ENCODE measurements at regions of chr3 and their contacts with region 1.

Region 1: GRCh38 chr3:56702490-56703315 is 19.6 kb upstream of the TASOR start:
- DNase-seq: peak in 3 of 6 donors; percentile 35 to 61 (median 44)
- ATAC-seq: peak; percentile 66 to 96 (median 92)
- H3K4me3 ChIP-seq: no peak overlapping the region
- H3K27ac ChIP-seq: no peak overlapping the region
- H3K4me1 ChIP-seq: peaks cover 0 to 6% (median 0%) of the 10 kb centered on the region in 3 donors
- H3K27me3 ChIP-seq: no peaks in the 10 kb centered on the region
- CTCF ChIP-seq: peak; percentile 64 to 80 (median 72)

Region 2: GRCh38 chr3:56154297-56154696 is 548.4 kb before region 1 on chr3:
- intact Hi-C with region 1: no loop called
- DNase-seq: no peak
- ATAC-seq: no peak
- H3K4me3 ChIP-seq: no peak overlapping the region
- H3K27ac ChIP-seq: no peak overlapping the region
- H3K4me1 ChIP-seq: no peaks in the 10 kb centered on the region
- H3K27me3 ChIP-seq: no peaks in the 10 kb centered on the region
- CTCF ChIP-seq: no peak

Region 3: DNA sequence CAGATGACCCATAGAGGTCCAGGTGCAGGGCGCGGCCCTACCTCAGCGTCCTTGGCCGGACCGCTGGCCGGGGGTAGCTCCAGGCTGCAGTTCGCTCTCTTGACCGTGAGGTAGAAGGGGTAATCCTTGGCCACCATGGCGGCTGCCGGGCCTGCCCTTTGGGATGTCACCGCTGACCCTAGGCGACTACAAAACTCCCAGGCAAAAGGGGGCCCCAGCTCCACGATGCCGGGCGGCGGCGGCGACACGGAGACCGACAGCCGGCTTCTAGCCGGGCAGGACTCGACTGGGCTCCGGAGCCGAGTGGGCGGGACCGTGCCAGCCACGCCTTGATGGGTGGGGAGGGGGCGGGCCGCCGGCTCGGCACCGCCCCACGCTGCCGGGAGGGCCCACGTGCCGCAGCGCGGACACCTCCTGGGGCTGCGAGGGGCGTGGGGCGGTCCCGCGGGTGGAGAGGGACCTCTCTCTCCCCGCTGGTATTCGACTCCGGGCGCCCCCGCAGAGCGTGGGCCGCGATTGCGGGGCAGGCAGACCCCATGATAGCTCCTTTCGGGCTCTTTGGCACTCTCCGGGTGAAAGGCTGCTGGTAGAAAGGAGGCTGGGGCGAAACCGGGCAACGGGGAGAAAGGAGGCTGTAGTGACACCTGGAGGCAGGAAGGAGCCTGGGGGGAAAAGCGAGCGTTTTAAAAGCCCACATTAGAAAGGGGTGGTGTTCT is 99.1 kb after region 1 on chr3 and contains the start of gene ARHGEF3:
- intact Hi-C with region 1: loop called in 2 of 3 experiments (anchors 5 to 10 kb)
- DNase-seq: peak; percentile 82 to 97 (median 91)
- ATAC-seq: peak; percentile 85 to 93 (median 91)
- H3K4me3 ChIP-seq: peak within 1 kb of the TSS; percentile 79 to 91 (median 85)
- H3K27ac ChIP-seq: peak within 1 kb of the TSS; percentile 21 to 85 (median 52)
- H3K4me1 ChIP-seq: peaks cover 0 to 27% (median 8%) of the 10 kb centered on the region in 3 donors
- H3K27me3 ChIP-seq: no peaks in the 10 kb centered on the region
- CTCF ChIP-seq: peak in 3 of 4 donors; percentile 23 to 34 (median 32)
- total RNA-seq, gene ARHGEF3: 12.6 to 36.5 (median 26.8) TPM

Region 4: GRCh38 chr3:56988458-56989168 is 285.9 kb after region 1 on chr3:
- intact Hi-C with region 1: loop called (anchors 2 to 10 kb)
- DNase-seq: peak; percentile 62 to 82 (median 71)
- ATAC-seq: peak; percentile 75 to 88 (median 83)
- H3K4me3 ChIP-seq: no peak overlapping the region
- H3K27ac ChIP-seq: no peak overlapping the region
- H3K4me1 ChIP-seq: no peaks in the 10 kb centered on the region
- H3K27me3 ChIP-seq: no peaks in the 10 kb centered on the region
- CTCF ChIP-seq: peak; percentile 41 to 72 (median 62)

Region 5: GRCh38 chr3:56997675-56998074 is 295.0 kb after region 1 on chr3:
- intact Hi-C with region 1: loop called in 1 of 3 experiments (anchors 10 kb)
- DNase-seq: no peak
- ATAC-seq: peak in 3 of 4 donors; percentile 8 to 27 (median 10)
- H3K4me3 ChIP-seq: no peak overlapping the region
- H3K27ac ChIP-seq: peak overlapping the region in 3 of 4 donors; percentile 9 to 73 (median 50)
- H3K4me1 ChIP-seq: peaks cover 3 to 13% (median 4%) of the 10 kb centered on the region in 3 donors
- H3K27me3 ChIP-seq: no peaks in the 10 kb centered on the region
- CTCF ChIP-seq: no peak

Measured in pancreas (tissue), 10 donors.